ENCODE measurements at regions of chr3 and their contacts with region 1.

Region 1: GRCh38 chr3:49906004-49906743 is 2.5 kb upstream of the MST1R start:
- DNase-seq: peak in 3 of 6 donors; percentile 36 to 71 (median 52)
- ATAC-seq: peak in 3 of 4 donors; percentile 50 to 53 (median 51)
- H3K4me3 ChIP-seq: peak overlapping the region in 1 of 4 donors; percentile 30
- H3K27ac ChIP-seq: peak overlapping the region; percentile 16 to 67 (median 38)
- H3K4me1 ChIP-seq: peaks cover 7 to 15% (median 9%) of the 10 kb centered on the region in 3 donors
- H3K27me3 ChIP-seq: no peaks in the 10 kb centered on the region
- CTCF ChIP-seq: peak in 3 of 4 donors; percentile 32 to 48 (median 44)

Region 2: DNA sequence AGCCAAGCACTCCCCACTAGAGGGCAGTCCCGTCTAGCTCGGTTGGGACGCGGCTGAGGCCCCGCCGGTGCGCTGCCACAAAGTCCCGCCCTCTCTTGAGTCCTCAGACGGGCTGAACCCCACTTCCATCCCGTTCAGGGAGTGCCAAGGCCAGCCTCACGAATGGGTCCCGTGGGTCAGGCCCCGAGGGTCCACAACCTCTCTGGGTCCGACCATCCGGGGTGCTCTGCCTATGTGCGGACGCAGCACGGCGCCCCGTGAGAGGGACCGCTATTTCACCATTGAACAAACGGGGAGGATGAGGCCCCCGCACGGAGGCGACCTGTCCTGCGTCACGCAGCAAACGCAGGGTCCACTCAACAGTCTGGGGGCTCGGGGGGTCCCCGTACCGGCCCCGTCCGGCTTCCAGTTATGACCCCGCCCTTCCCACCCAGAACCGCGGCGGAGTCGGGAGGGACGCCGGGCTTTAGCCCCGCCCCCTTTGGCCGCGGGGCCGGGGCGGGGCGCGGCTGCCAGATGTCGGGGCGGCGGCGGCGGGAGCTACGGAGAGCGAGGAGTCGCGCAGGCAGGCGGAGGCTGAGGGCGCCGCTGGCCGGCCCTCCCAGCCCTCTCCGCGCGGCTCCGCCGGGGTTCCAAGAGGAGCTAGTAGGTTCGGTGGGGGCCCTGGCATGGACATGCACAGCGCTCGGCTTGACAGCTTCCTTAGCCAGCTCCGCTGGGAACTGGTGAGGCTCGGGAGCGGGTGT is 103.3 kb before region 1 on chr3 and contains the start of gene INKA1:
- intact Hi-C with region 1: loop called in 1 of 3 experiments (anchors 5 kb)
- DNase-seq: peak; percentile 82 to 96 (median 90)
- ATAC-seq: peak; percentile 85 to 94 (median 92)
- H3K4me3 ChIP-seq: peak within 1 kb of the TSS; percentile 55 to 97 (median 75)
- H3K27ac ChIP-seq: peak within 1 kb of the TSS; percentile 39 to 57 (median 41)
- H3K4me1 ChIP-seq: peaks cover 0 to 21% (median 20%) of the 10 kb centered on the region in 3 donors
- H3K27me3 ChIP-seq: no peaks in the 10 kb centered on the region
- CTCF ChIP-seq: peak in 3 of 4 donors; percentile 16 to 85 (median 82)
- total RNA-seq, gene INKA1: 0.55 to 1.4 (median 0.62) TPM

Region 3: DNA sequence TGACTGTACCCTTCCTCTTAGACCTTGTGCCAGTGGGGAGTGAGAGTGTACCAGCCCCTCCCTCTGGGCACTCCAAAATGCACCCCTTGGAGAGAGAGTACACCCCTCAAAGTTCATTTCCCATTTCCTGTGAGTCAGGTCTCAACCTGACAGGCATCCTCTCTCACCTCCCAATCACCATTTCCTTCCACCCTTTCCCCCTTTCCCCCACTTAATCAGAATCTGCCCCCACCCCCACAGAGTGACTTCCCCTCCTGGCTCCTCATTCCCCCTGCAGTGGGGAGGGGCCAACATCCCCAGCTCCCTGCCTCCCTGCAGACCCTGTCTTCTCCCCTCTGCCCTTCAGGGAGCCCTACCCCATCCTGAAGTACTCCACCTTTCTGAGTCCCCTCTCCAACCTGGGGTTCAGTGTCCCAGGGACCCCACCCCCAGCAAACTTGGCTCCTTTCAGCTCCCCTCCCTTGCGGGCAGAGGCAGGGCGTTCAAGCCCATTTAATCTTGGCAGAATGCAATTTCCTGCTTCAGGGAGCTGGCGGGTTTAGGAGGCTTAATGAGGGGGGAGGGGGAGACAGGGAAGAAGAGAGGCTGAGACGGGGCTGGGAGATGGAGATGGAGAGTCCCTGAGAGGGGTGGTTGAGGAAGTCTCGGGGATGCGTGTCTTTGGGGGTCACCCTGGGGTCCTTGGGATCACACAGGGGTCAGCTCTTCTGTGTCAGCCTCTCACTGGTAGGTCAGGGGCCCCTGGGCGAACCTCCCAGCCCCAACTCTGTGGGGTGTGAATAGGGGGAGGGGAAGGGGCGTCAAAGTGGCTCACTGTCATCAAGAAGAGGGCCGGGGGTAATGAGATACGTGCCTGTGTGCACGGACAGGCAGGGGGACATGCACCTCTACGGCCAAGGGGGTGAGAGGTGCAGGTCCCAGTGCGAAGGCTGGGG is 232.4 kb after region 1 on chr3:
- intact Hi-C with region 1: no loop called
- DNase-seq: no peak
- ATAC-seq: peak in 1 of 4 donors; percentile 19
- H3K4me3 ChIP-seq: no peak overlapping the region
- H3K27ac ChIP-seq: no peak overlapping the region
- H3K4me1 ChIP-seq: no peaks in the 10 kb centered on the region
- H3K27me3 ChIP-seq: no peaks in the 10 kb centered on the region
- CTCF ChIP-seq: no peak

Measured in pancreas (tissue), 10 donors.